Naive thymus-derived CD4-positive, alpha-beta T cell (primary cell): ENCODE measurements at regions of chr11 and their contacts with region 1.

Region 1: DNA sequence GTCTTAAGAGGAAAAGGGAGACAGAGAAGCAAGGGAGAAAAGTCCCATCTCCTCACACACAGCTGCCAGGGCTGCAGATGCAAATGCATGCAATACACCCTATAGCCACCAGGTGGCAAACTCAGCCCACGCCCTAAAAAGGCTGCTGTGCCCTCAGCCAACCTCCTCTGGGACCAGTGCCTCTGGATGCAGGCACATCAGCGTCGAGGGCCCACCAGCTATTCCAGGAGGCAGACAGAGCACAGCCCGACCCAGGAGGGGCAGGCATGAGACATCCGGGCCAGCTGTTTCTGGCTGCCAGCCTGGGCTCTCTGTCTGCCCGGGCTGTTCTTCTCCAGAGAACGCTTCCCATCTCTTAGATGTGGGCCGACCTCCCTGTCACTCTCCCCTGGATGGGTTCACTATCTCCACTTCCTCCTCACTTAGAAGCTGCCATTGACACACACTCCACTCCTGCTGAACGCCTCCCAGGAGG is 39.7 kb downstream of the TPBGL start:
- DNase-seq: peak; percentile 56 to 83 (median 69)
- ATAC-seq: peak; percentile 78
- H3K4me3 ChIP-seq: no peak overlapping the region
- H3K4me3 Mint-ChIP-seq: peak overlapping the region in 5 of 10 donors; percentile 16 to 65 (median 60)
- H3K27ac ChIP-seq: no peak overlapping the region
- H3K27ac Mint-ChIP-seq: peak overlapping the region; percentile 79 to 99 (median 91)
- H3K4me1 ChIP-seq: peaks cover 27 to 46% of the 10 kb centered on the region in 2 donors
- H3K4me1 Mint-ChIP-seq: peaks cover 34 to 57% (median 47%) of the 10 kb centered on the region in 7 donors
- H3K27me3 ChIP-seq: no peaks in the 10 kb centered on the region
- H3K27me3 Mint-ChIP-seq: no peaks in the 10 kb centered on the region

Region 2: DNA sequence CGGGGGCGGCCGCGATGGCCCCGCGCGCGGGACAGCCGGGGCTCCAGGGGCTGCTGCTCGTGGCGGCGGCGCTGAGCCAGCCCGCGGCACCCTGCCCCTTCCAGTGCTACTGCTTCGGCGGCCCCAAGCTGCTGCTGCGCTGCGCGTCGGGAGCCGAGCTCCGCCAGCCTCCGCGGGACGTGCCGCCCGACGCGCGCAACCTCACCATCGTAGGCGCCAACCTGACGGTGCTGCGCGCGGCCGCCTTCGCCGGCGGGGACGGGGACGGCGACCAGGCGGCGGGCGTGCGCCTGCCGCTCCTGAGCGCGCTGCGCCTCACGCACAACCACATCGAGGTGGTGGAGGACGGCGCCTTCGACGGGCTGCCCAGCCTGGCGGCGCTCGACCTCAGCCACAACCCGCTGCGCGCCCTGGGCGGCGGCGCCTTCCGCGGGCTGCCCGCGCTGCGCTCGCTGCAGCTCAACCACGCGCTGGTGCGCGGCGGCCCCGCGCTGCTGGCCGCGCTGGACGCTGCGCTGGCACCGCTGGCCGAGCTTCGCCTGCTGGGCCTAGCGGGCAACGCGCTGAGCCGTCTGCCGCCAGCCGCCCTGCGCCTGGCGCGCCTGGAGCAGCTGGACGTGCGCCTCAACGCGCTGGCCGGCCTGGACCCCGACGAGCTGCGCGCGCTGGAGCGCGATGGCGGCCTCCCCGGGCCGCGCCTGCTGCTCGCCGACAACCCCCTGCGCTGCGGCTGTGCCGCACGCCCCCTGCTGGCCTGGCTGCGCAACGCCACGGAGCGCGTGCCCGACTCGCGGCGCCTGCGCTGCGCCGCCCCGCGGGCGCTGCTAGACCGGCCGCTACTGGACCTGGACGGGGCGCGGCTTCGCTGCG is 39.0 kb before region 1 on chr11:
- CTCF ChIA-PET with region 1: interaction called, 83 read pairs
- POLR2A ChIA-PET with region 1: interaction called, 10 read pairs
- intact Hi-C with region 1: loop called in 1 of 2 experiments (anchors 1 kb)
- DNase-seq: peak; percentile 71 to 95 (median 86)
- ATAC-seq: peak; percentile 98
- H3K4me3 ChIP-seq: peak overlapping the region; percentile 54
- H3K4me3 Mint-ChIP-seq: peak overlapping the region; percentile 59 to 85 (median 75)
- H3K27ac ChIP-seq: no peak overlapping the region
- H3K27ac Mint-ChIP-seq: no peak overlapping the region
- H3K4me1 ChIP-seq: peaks cover 5 to 15% of the 10 kb centered on the region in 2 donors
- H3K4me1 Mint-ChIP-seq: peaks cover 0 to 14% (median 10%) of the 10 kb centered on the region in 7 donors
- H3K27me3 ChIP-seq: peaks cover 3 to 5% of the 10 kb centered on the region in 2 donors
- H3K27me3 Mint-ChIP-seq: peaks cover 13 to 68% (median 27%) of the 10 kb centered on the region in 5 donors

Region 3: GRCh38 chr11:75263944-75264349 is 16.3 kb before region 1 on chr11:
- CTCF ChIA-PET with region 1: interaction called, 23 read pairs
- POLR2A ChIA-PET with region 1: interaction called, 104 read pairs
- intact Hi-C with region 1: loop called in 1 of 2 experiments (anchors 1 kb)
- DNase-seq: no peak
- ATAC-seq: peak; percentile 35
- H3K4me3 ChIP-seq: no peak overlapping the region
- H3K4me3 Mint-ChIP-seq: peak overlapping the region in 6 of 10 donors; percentile 9 to 55 (median 20)
- H3K27ac ChIP-seq: peak overlapping the region; percentile 33
- H3K27ac Mint-ChIP-seq: peak overlapping the region; percentile 18 to 87 (median 59)
- H3K4me1 ChIP-seq: peaks cover 19 to 41% of the 10 kb centered on the region in 2 donors
- H3K4me1 Mint-ChIP-seq: peaks cover 26 to 62% (median 52%) of the 10 kb centered on the region in 7 donors
- H3K27me3 ChIP-seq: no peaks in the 10 kb centered on the region
- H3K27me3 Mint-ChIP-seq: peaks cover 0 to 2% (median 0%) of the 10 kb centered on the region in 5 donors

Region 4: GRCh38 chr11:75328426-75329277 is 48.4 kb after region 1 on chr11:
- CTCF ChIA-PET with region 1: interaction called, 92 read pairs
- POLR2A ChIA-PET with region 1: interaction called, 17 read pairs
- intact Hi-C with region 1: loop called (anchors 1 kb)
- DNase-seq: peak in 8 of 9 donors; percentile 44 to 82 (median 66)
- ATAC-seq: peak; percentile 92
- H3K4me3 ChIP-seq: no peak overlapping the region
- H3K4me3 Mint-ChIP-seq: peak overlapping the region; percentile 9 to 75 (median 68)
- H3K27ac ChIP-seq: peak overlapping the region; percentile 58
- H3K27ac Mint-ChIP-seq: peak overlapping the region; percentile 79 to 96 (median 91)
- H3K4me1 ChIP-seq: peaks cover 16 to 54% of the 10 kb centered on the region in 2 donors
- H3K4me1 Mint-ChIP-seq: peaks cover 47 to 88% (median 80%) of the 10 kb centered on the region in 7 donors
- H3K27me3 ChIP-seq: no peaks in the 10 kb centered on the region
- H3K27me3 Mint-ChIP-seq: no peaks in the 10 kb centered on the region

Region 5: GRCh38 chr11:75342903-75343870 is 62.9 kb after region 1 on chr11:
- CTCF ChIA-PET with region 1: interaction called, 19 read pairs
- POLR2A ChIA-PET with region 1: interaction called, 22 read pairs
- intact Hi-C with region 1: no loop called
- DNase-seq: no peak
- ATAC-seq: no peak
- H3K4me3 ChIP-seq: no peak overlapping the region
- H3K4me3 Mint-ChIP-seq: peak overlapping the region in 8 of 10 donors; percentile 6 to 84 (median 40)
- H3K27ac ChIP-seq: peak overlapping the region; percentile 31
- H3K27ac Mint-ChIP-seq: peak overlapping the region; percentile 30 to 98 (median 84)
- H3K4me1 ChIP-seq: peaks cover 35 to 93% of the 10 kb centered on the region in 2 donors
- H3K4me1 Mint-ChIP-seq: peaks cover 84 to 100% (median 98%) of the 10 kb centered on the region in 7 donors
- H3K27me3 ChIP-seq: no peaks in the 10 kb centered on the region
- H3K27me3 Mint-ChIP-seq: no peaks in the 10 kb centered on the region

Region 6: DNA sequence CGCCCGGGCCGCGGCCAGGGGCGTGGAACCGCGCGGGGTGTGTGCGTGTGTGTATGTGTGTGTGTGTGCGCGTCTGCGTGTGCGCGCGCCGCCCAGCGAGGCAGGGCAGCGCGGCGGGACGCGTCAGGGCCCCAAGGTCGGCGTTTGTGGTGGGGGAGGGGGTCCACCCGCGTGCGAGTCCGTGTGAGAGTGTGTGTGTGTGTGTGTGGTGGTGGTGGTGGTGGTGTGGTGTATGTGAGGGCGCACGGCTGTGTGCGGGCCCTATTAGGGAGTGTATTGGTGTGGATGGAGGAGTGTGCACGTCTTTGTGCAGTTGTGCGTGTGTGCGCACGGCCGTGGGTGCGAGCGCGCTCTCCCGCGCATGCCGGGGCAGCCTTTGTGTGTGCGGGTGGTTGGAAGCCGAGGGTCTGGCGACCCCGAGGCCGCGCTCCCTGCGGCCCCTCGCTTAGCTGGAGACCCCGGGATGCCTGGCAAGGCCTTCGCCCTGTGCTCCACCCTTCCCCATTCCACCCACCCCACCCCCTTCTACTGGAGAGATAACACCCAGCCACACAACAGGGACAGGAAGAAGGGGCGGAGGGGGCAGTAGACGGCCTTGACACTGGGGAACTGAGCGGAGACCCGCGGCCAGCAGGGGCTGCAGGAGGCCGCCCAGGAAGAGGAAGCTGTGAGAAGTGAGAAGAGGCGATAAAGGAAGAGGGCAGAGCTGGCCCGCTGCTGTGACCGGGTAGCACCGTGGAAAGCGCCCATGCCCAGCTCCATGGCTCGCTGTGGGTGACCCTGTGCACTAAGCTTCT is 71.7 kb after region 1 on chr11:
- CTCF ChIA-PET with region 1: interaction called, 4 read pairs
- POLR2A ChIA-PET with region 1: interaction called, 84 read pairs
- intact Hi-C with region 1: loop called in 1 of 2 experiments (anchors 1 kb)
- DNase-seq: peak; percentile 49 to 75 (median 70)
- ATAC-seq: peak; percentile 80
- H3K4me3 ChIP-seq: peak overlapping the region; percentile 87
- H3K4me3 Mint-ChIP-seq: peak overlapping the region; percentile 84 to 96 (median 94)
- H3K27ac ChIP-seq: peak overlapping the region; percentile 74
- H3K27ac Mint-ChIP-seq: peak overlapping the region; percentile 80 to 96 (median 92)
- H3K4me1 ChIP-seq: peaks cover 9 to 53% of the 10 kb centered on the region in 2 donors
- H3K4me1 Mint-ChIP-seq: peaks cover 64 to 82% (median 72%) of the 10 kb centered on the region in 7 donors
- H3K27me3 ChIP-seq: no peaks in the 10 kb centered on the region
- H3K27me3 Mint-ChIP-seq: peaks cover 0 to 3% (median 0%) of the 10 kb centered on the region in 5 donors

Region 7: DNA sequence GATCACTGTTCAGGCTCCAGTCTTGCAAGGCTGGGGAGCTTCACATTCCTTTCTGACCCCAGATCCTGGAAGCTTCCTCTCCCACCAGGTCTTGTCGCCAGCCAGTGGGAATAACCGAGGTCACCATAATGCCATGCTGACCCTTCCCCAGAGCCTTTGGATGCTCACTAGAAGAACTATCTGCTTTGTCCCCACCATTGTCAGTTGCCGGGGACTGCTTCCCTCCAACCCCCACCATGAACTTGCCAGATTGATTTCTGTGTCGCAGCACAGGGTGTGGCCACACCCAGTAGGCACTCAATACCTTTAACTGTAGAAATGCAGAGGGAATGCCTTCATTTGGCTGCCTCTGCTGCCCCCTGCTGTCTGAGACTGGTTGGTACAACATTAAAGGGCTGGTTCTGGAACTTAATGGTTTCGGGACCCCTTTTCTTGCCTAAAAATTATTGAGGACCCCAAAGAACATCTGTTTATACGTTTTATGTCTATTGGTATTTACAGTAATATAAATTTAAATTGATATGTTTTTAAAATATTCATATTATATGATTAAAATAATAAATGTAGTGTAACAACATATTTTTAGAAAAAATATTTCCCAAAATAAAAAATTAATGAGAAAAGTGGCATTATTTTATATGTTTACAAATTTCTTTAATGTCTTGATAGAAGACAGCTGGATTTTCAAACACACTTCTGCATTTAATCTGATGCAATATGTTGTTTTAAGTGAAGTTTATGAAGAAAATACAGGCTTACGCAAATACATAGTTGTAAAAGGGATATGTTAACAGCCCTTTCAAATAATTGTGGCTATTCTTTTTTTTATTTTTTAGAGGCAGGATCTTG is 252.2 kb after region 1 on chr11:
- CTCF ChIA-PET with region 1: interaction called, 8 read pairs
- POLR2A ChIA-PET with region 1: interaction called, 5 read pairs
- intact Hi-C with region 1: loop called (anchors 1 to 5 kb)
- DNase-seq: peak; percentile 63 to 83 (median 76)
- ATAC-seq: peak; percentile 91
- H3K4me3 ChIP-seq: no peak overlapping the region
- H3K4me3 Mint-ChIP-seq: peak overlapping the region in 3 of 10 donors; percentile 1 to 59 (median 41)
- H3K27ac ChIP-seq: no peak overlapping the region
- H3K27ac Mint-ChIP-seq: peak overlapping the region in 4 of 9 donors; percentile 11 to 83 (median 62)
- H3K4me1 ChIP-seq: peaks cover 5 to 14% of the 10 kb centered on the region in 2 donors
- H3K4me1 Mint-ChIP-seq: peaks cover 8 to 61% (median 22%) of the 10 kb centered on the region in 7 donors
- H3K27me3 ChIP-seq: no peaks in the 10 kb centered on the region
- H3K27me3 Mint-ChIP-seq: peaks cover 0 to 7% (median 0%) of the 10 kb centered on the region in 5 donors